GM12878 (cell line): ENCODE measurements at regions of chr3 and their contacts with region 1.

Region 1: DNA sequence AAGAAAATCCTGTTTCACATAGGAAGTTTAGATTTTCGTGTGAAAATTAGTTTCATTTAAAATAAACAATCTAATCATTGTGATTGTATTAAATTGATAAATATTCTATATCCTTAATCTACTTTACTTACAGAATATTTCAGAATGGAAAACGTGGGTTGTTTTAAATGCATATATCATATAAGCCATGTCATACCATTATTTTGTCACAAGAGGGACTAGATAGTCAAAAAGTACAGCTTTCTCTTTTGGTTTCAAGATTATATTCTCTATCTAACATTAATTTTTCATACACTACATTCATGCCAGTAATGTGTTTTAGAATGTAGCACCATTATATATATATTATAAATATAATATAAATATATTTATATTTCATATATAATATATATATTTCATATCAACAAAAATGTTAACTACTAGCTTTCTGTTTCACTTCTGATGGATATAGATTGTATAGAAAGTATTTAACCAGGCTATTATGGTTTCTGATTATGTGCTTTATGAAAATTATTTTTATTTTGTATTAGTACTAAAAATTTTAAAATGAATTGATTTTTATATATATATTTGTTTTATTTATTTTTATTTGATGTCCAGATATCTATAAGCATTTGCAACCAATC is 45.3 kb downstream of the OSTN start:
- DNase-seq: no peak
- ATAC-seq: no peak
- H3K4me3 ChIP-seq: no peak overlapping the region
- H3K27ac ChIP-seq: no peak overlapping the region
- H3K4me1 ChIP-seq: no peaks in the 10 kb centered on the region; the same call in 1 of the 2 replicates
- H3K27me3 ChIP-seq: no peaks in the 10 kb centered on the region
- CTCF ChIP-seq: peak in 1 of 3 experiments; percentile 27; a peak in 2 of 6 replicates
- EP300 ChIP-seq: no peak
- POLR2A ChIP-seq: no peak
- RAD21 ChIP-seq: peak; percentile 64

Region 2: DNA sequence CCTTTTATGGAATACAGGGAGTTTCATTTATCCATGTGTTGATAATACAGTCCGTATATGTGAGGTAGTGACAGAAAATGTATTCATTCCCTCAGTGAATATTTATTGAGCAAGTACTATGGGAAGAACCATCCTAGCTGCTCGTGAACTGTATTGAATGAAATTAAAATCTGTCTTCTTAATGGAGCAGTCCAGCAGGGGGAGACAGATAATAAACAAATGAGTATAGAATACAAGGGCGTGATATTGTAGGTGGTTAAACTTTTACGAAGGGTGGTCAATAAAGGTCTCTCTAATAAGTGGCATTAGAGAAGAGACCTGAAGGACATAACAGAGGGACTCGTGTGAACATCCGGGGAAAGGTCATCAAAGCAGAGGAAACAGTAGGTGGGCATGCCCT is 108.0 kb before region 1 on chr3:
- CTCF ChIA-PET with region 1: interaction called, 6 read pairs
- POLR2A ChIA-PET with region 1: no interaction called
- RAD21 ChIA-PET with region 1: interaction called, 4 read pairs
- SMC1A ChIA-PET with region 1: interaction called, 5 read pairs
- in situ Hi-C with region 1: no loop called
- intact Hi-C with region 1: loop called (anchors 2 kb)
- DNase-seq: no peak
- ATAC-seq: peak; percentile 70
- H3K4me3 ChIP-seq: no peak overlapping the region
- H3K27ac ChIP-seq: no peak overlapping the region
- H3K4me1 ChIP-seq: peaks cover 24% of the 10 kb centered on the region
- H3K27me3 ChIP-seq: no peaks in the 10 kb centered on the region
- CTCF ChIP-seq: peak; percentile 43 to 51 (median 46); a peak in 4 of 6 replicates
- EP300 ChIP-seq: no peak
- POLR2A ChIP-seq: no peak
- RAD21 ChIP-seq: peak; percentile 76

Region 3: DNA sequence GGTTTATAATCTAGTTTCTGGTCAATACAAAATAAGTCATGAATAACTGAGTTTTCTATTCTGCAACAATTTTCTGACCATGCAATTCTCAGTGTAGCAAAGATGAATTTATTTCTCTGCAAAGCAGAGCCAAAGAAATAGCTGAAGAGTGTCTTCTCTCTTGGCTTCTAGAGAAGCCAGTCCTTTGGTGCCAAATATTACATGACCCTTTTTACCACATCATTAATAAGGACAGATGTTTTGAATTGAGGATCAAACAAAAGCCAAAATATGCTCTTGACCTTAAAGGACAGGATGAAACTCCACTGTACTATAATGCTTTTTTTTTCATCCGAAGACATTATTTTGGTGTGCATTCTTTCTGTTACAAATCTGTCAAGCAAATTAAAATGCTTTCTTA is 85.5 kb before region 1 on chr3:
- CTCF ChIA-PET with region 1: no interaction called
- POLR2A ChIA-PET with region 1: no interaction called
- RAD21 ChIA-PET with region 1: no interaction called
- SMC1A ChIA-PET with region 1: no interaction called
- in situ Hi-C with region 1: no loop called
- intact Hi-C with region 1: no loop called
- DNase-seq: no peak
- ATAC-seq: no peak
- H3K4me3 ChIP-seq: no peak overlapping the region
- H3K27ac ChIP-seq: no peak overlapping the region
- H3K4me1 ChIP-seq: no peaks in the 10 kb centered on the region
- H3K27me3 ChIP-seq: no peaks in the 10 kb centered on the region
- CTCF ChIP-seq: no peak
- EP300 ChIP-seq: no peak
- POLR2A ChIP-seq: no peak
- RAD21 ChIP-seq: no peak

Region 4: GRCh38 chr3:191269289-191270085 is 25.1 kb after region 1 on chr3:
- CTCF ChIA-PET with region 1: interaction called, 5 read pairs
- POLR2A ChIA-PET with region 1: interaction called, 6 read pairs
- RAD21 ChIA-PET with region 1: interaction called, 36 read pairs
- SMC1A ChIA-PET with region 1: interaction called, 19 read pairs
- in situ Hi-C with region 1: no loop called
- intact Hi-C with region 1: no loop called
- DNase-seq: peak; percentile 49
- ATAC-seq: peak; percentile 87
- H3K4me3 ChIP-seq: no peak overlapping the region
- H3K27ac ChIP-seq: peak overlapping the region; percentile 46; the same call in 1 of the 2 replicates
- H3K4me1 ChIP-seq: peaks cover 11% of the 10 kb centered on the region
- H3K27me3 ChIP-seq: no peaks in the 10 kb centered on the region
- CTCF ChIP-seq: no peak
- EP300 ChIP-seq: no peak; a peak in 2 of 4 replicates
- POLR2A ChIP-seq: no peak
- RAD21 ChIP-seq: no peak

Region 5: DNA sequence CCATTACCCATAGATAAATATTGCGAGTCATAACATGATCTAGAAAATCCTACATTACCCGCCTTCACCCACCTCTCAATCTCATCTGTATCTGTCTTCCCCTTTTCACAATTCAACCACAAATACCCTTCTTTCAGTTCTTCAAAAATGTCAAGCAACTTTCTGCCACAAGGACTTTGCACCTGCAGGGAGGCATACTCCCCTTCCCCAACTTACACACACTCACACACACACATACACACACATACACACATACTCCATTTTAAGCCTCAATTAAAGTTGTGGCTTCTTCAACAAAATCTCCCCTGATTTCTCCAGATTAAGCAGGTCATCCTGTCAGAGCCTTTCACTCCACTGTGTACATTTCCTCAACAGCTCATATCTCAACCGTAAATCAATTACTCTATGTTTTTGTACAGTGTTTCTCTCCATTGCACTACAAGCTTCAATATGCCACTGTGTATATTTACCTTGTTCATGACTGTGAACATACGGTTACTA is 51.7 kb after region 1 on chr3:
- CTCF ChIA-PET with region 1: interaction called, 11 read pairs
- POLR2A ChIA-PET with region 1: interaction called, 4 read pairs
- RAD21 ChIA-PET with region 1: interaction called, 15 read pairs
- SMC1A ChIA-PET with region 1: interaction called, 32 read pairs
- in situ Hi-C with region 1: no loop called
- intact Hi-C with region 1: loop called (anchors 1 kb)
- DNase-seq: peak; percentile 88
- ATAC-seq: peak; percentile 80
- H3K4me3 ChIP-seq: no peak overlapping the region
- H3K27ac ChIP-seq: peak overlapping the region; percentile 5; the same call in 1 of the 2 replicates
- H3K4me1 ChIP-seq: peaks cover 46% of the 10 kb centered on the region
- H3K27me3 ChIP-seq: no peaks in the 10 kb centered on the region
- CTCF ChIP-seq: no peak
- EP300 ChIP-seq: peak; percentile 88 to 98
- POLR2A ChIP-seq: no peak
- RAD21 ChIP-seq: no peak

Region 6: DNA sequence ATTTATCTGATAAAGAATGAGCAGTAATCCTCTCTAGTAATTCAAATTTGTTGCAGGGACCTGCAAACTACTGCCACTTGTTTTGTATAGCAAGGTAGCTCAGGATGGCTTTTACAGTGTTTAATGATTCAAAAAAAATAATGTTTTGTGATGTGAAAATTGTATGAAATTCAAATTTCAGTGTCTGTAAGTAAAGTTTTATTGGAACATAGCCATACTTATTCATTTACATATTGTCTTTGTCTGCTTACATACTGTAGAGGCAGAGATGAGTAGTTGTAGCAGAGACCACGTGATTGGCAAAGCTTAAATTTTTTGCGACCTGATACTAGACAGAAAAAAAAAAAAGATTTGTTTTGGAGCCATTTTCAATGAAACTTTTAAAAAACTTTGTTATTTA is 92.5 kb after region 1 on chr3:
- CTCF ChIA-PET with region 1: interaction called, 16 read pairs
- POLR2A ChIA-PET with region 1: no interaction called
- RAD21 ChIA-PET with region 1: interaction called, 38 read pairs
- SMC1A ChIA-PET with region 1: interaction called, 78 read pairs
- in situ Hi-C with region 1: no loop called
- intact Hi-C with region 1: no loop called
- DNase-seq: no peak
- ATAC-seq: peak; percentile 37
- H3K4me3 ChIP-seq: peak overlapping the region; percentile 54
- H3K27ac ChIP-seq: peak overlapping the region; percentile 15; the same call in 1 of the 2 replicates
- H3K4me1 ChIP-seq: peaks cover 12% of the 10 kb centered on the region; the same call in 1 of the 2 replicates
- H3K27me3 ChIP-seq: no peaks in the 10 kb centered on the region
- CTCF ChIP-seq: no peak
- EP300 ChIP-seq: no peak
- POLR2A ChIP-seq: no peak
- RAD21 ChIP-seq: no peak

Region 7: DNA sequence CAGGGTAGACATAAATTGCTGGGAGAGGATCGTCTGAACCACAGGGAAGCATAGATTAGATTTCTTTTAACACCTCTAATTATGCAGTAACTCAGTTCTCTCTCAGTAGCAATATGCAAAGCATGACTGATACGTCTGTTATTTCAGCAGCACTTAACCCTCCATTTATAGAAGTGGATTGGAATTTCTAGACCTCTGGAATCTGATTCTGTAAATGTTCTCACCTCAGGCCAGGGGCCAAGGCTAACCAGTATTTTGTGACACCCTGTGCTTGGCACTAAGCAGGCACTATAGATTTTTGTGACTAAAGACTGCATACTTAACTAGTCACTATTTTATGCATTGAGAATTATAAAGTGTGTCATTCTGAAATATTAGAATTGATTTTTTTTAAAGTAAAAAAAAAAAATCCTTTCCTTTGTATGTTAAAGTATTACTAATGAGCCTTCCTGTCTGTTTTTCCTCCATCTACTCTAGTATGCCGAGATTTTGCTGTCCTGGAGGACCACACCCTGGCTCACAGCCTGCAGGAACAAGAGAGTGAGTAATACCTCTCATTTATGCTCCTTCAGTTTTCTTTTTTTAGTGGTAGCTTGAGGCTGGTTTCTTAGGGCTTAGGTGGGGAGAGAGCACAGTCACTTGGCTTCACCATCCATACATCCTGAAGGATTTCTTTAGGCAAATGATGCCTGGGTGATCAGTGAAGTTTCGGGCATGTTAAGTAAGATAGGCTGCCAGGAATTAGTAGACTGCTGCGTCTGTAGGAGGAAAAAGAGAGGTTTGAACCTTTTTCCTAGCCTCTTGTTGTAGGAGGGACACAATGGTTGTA is 112.5 kb after region 1 on chr3:
- CTCF ChIA-PET with region 1: interaction called, 35 read pairs
- POLR2A ChIA-PET with region 1: interaction called, 11 read pairs
- RAD21 ChIA-PET with region 1: interaction called, 72 read pairs
- SMC1A ChIA-PET with region 1: interaction called, 49 read pairs
- in situ Hi-C with region 1: no loop called
- intact Hi-C with region 1: no loop called
- DNase-seq: no peak
- ATAC-seq: 0 out of 3 replicates have a peak, but pooled peaks have one; percentile 5
- H3K4me3 ChIP-seq: no peak overlapping the region
- H3K27ac ChIP-seq: peak overlapping the region; percentile 28; the same call in 1 of the 2 replicates
- H3K4me1 ChIP-seq: peaks cover 26% of the 10 kb centered on the region
- H3K27me3 ChIP-seq: no peaks in the 10 kb centered on the region
- CTCF ChIP-seq: no peak
- EP300 ChIP-seq: no peak
- POLR2A ChIP-seq: no peak
- RAD21 ChIP-seq: no peak

Region 8: GRCh38 chr3:191383124-191383523 is 138.8 kb after region 1 on chr3:
- CTCF ChIA-PET with region 1: interaction called, 13 read pairs
- POLR2A ChIA-PET with region 1: interaction called, 3 read pairs
- RAD21 ChIA-PET with region 1: interaction called, 19 read pairs
- SMC1A ChIA-PET with region 1: interaction called, 20 read pairs
- in situ Hi-C with region 1: no loop called
- intact Hi-C with region 1: loop called (anchors 5 kb)
- DNase-seq: no peak
- ATAC-seq: no peak
- H3K4me3 ChIP-seq: no peak overlapping the region
- H3K27ac ChIP-seq: no peak overlapping the region
- H3K4me1 ChIP-seq: peaks cover 12% of the 10 kb centered on the region
- H3K27me3 ChIP-seq: no peaks in the 10 kb centered on the region
- CTCF ChIP-seq: no peak
- EP300 ChIP-seq: no peak
- POLR2A ChIP-seq: no peak
- RAD21 ChIP-seq: no peak